SK-N-SH (cell line): ENCODE measurements at regions of chr11 and their contacts with region 1.

Region 1: GRCh38 chr11:78645226-78646202 is 70.8 kb upstream of the NARS2 start:
- DNase-seq: peak; percentile 80
- H3K4me3 ChIP-seq: no peak overlapping the region; a peak in 1 of 4 replicates
- H3K27ac ChIP-seq: no peak overlapping the region
- H3K4me1 ChIP-seq: peaks cover 0 to 8% of the 10 kb centered on the region in 2 experiments; a peak in 1 of 4 replicates
- H3K27me3 ChIP-seq: no peaks in the 10 kb centered on the region
- CTCF ChIP-seq: peak; percentile 98
- EP300 ChIP-seq: no peak
- RAD21 ChIP-seq: peak; percentile 97

Region 2: GRCh38 chr11:78574386-78575381 is 70.8 kb before region 1 on chr11 and contains the start of gene NARS2:
- CTCF ChIA-PET with region 1: no interaction called
- POLR2A ChIA-PET with region 1: no interaction called
- DNase-seq: peak; percentile 97
- H3K4me3 ChIP-seq: peak within 1 kb of the TSS; percentile 65 to 84
- H3K27ac ChIP-seq: peak within 1 kb of the TSS; percentile 71 to 93
- H3K4me1 ChIP-seq: peaks cover 0 to 11% of the 10 kb centered on the region in 2 experiments; a peak in 2 of 4 replicates
- H3K27me3 ChIP-seq: no peaks in the 10 kb centered on the region
- CTCF ChIP-seq: no peak
- EP300 ChIP-seq: no peak
- RAD21 ChIP-seq: no peak; the same call in 1 of the 2 replicates
- polyA plus RNA-seq, gene NARS2: 8.9 and 11.3 TPM in 2 replicates

Region 3: DNA sequence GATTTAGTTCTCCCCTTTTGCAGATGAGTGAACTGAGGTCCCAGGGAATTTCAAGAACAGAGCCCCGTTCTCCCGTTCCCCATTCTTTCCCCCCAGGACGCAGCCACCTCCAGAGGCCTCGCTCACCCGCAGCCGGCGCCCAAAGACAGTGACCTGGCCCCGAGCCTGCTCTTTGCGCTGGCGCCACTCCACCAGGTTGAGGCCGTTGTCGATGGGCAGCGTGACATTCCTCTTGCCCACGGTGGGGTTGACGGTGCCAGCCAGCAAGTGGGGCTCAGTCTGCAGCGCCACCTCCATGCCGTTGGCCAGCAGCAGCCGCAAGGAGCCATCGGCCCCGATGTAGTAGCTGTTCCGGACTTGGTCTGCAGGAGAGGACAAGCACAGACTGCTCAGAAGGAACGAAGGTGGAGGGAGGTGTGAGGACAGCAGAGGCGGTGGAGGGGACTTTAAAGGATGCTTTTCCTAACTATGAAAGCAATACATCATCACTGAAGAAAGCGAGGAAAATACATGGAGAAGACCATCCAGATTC is 30.6 kb after region 1 on chr11:
- CTCF ChIA-PET with region 1: interaction called, 20 read pairs
- POLR2A ChIA-PET with region 1: no interaction called
- DNase-seq: no peak
- H3K4me3 ChIP-seq: no peak overlapping the region
- H3K27ac ChIP-seq: no peak overlapping the region; a peak in 1 of 4 replicates
- H3K4me1 ChIP-seq: no peaks in the 10 kb centered on the region
- H3K27me3 ChIP-seq: no peaks in the 10 kb centered on the region
- CTCF ChIP-seq: no peak
- EP300 ChIP-seq: no peak
- RAD21 ChIP-seq: no peak

Region 4: GRCh38 chr11:78731027-78731426 is 85.5 kb after region 1 on chr11:
- CTCF ChIA-PET with region 1: interaction called, 12 read pairs
- POLR2A ChIA-PET with region 1: no interaction called
- DNase-seq: no peak
- H3K4me3 ChIP-seq: no peak overlapping the region
- H3K27ac ChIP-seq: peak overlapping the region in 1 of 2 experiments; percentile 94; a peak in 2 of 4 replicates
- H3K4me1 ChIP-seq: peaks cover 0 to 41% of the 10 kb centered on the region in 2 experiments; a peak in 2 of 4 replicates
- H3K27me3 ChIP-seq: no peaks in the 10 kb centered on the region
- CTCF ChIP-seq: no peak
- EP300 ChIP-seq: no peak
- RAD21 ChIP-seq: no peak

Region 5: DNA sequence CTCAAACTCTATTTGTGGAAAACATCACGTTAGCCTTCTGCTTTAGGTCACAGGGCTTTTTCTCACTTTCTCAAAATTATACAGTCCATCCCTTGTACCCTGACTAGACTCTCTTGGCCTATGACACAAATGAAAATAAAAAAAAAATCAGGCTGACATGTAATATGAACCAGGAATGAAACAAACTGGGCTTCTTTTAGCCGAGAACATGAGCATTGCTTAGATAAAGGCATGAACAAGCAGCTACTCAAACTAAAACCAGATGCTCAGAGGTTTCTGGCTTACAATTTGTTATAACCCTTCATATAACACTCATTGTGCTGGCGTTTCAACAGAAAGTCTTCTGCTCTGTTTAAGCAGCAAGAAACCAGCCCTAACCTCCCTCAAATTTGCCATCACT is 194.7 kb after region 1 on chr11:
- CTCF ChIA-PET with region 1: interaction called, 21 read pairs
- POLR2A ChIA-PET with region 1: no interaction called
- DNase-seq: peak; percentile 36
- H3K4me3 ChIP-seq: no peak overlapping the region; a peak in 1 of 4 replicates
- H3K27ac ChIP-seq: peak overlapping the region; percentile 69 to 93; a peak in 3 of 4 replicates
- H3K4me1 ChIP-seq: peaks cover 0 to 27% of the 10 kb centered on the region in 2 experiments; a peak in 3 of 4 replicates
- H3K27me3 ChIP-seq: no peaks in the 10 kb centered on the region
- CTCF ChIP-seq: no peak
- EP300 ChIP-seq: peak in 1 of 2 experiments; percentile 50; a peak in 2 of 4 replicates
- RAD21 ChIP-seq: 0 out of 2 replicates have a peak, but pooled peaks have one; percentile 9

Region 6: DNA sequence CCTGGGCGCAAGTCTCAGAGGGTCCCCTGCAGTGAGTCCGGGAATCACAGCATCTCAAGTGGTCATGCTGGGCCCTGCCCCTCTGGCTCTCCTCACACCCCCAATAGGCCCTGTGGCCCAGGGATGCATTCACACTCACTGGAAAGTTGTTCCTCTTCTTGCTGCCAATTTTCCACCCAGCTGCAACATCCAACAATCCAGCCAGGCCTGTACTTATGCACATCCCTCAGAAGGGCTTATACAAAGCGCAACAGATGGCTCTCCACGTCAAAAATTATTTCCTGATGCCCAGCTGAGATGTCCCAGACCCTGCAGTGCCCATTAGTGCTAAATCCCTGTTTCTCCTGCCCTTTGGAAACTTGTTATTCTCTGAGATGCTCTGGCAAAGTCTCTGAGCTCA is 337.0 kb after region 1 on chr11:
- CTCF ChIA-PET with region 1: interaction called, 30 read pairs
- POLR2A ChIA-PET with region 1: no interaction called
- DNase-seq: peak; percentile 72
- H3K4me3 ChIP-seq: no peak overlapping the region
- H3K27ac ChIP-seq: peak overlapping the region; percentile 75 to 100
- H3K4me1 ChIP-seq: peaks cover 13 to 68% of the 10 kb centered on the region in 2 experiments; a peak in 3 of 4 replicates
- H3K27me3 ChIP-seq: no peaks in the 10 kb centered on the region
- CTCF ChIP-seq: no peak
- EP300 ChIP-seq: peak; percentile 95 to 100
- RAD21 ChIP-seq: peak; percentile 49

Region 7: GRCh38 chr11:79087238-79087960 is 441.9 kb after region 1 on chr11:
- CTCF ChIA-PET with region 1: interaction called, 27 read pairs
- POLR2A ChIA-PET with region 1: no interaction called
- DNase-seq: peak; percentile 40
- H3K4me3 ChIP-seq: no peak overlapping the region
- H3K27ac ChIP-seq: peak overlapping the region; percentile 92 to 94
- H3K4me1 ChIP-seq: peaks cover 34 to 49% of the 10 kb centered on the region in 2 experiments
- H3K27me3 ChIP-seq: no peaks in the 10 kb centered on the region
- CTCF ChIP-seq: no peak
- EP300 ChIP-seq: peak; percentile 59 to 98; a peak in 3 of 4 replicates
- RAD21 ChIP-seq: no peak

Region 8: DNA sequence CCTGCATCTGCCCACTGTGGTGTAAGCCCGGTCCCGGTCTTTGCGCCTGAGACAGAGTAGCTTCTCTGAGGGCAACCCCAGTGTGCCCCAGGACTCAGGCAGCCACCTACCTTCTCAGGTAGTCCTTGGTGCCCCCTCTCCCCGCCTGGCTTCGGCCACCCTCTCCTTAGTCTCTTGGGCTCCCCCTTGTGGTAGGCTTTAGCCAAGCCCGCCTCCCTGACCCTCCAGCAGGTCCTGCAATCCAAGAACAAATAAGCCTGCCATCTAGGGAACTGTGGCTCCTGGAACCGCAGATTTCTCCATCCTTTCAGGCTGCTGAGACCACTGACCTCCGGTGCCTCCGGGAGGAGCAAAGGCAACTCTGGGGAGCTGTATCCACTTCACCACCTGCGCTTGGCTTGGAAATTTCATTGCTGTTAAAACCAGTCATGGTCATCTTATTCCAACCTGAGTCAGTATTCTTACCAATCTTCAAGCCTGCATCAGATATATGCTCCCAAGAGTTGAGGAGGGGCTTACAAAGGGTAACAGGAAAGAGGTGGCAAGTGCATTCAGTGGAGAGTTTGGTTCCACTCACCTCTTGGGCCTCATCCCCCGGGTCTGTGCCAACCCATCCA is 848.1 kb after region 1 on chr11:
- CTCF ChIA-PET with region 1: interaction called, 18 read pairs
- POLR2A ChIA-PET with region 1: interaction called, 3 read pairs
- DNase-seq: peak; percentile 85
- H3K4me3 ChIP-seq: no peak overlapping the region; a peak in 1 of 4 replicates
- H3K27ac ChIP-seq: no peak overlapping the region
- H3K4me1 ChIP-seq: peaks cover 0 to 2% of the 10 kb centered on the region in 2 experiments; a peak in 1 of 4 replicates
- H3K27me3 ChIP-seq: no peaks in the 10 kb centered on the region
- CTCF ChIP-seq: peak; percentile 93
- EP300 ChIP-seq: no peak
- RAD21 ChIP-seq: peak; percentile 75